Activated CD4-positive, alpha-beta memory T cell treated with anti-CD3 and anti-CD28 coated beads, Interleukin-2, amount 10 ng/mL, durations not matched to agents 7 days and 5 days (primary cell): ENCODE measurements at regions of chr5 and their contacts with region 1.

Region 1: GRCh38 chr5:126676195-126676624 is 75.5 kb downstream of the PHAX start:
- DNase-seq: peak; percentile 75
- H3K4me3 Mint-ChIP-seq: no peak overlapping the region
- H3K27ac Mint-ChIP-seq: peak overlapping the region; percentile 1
- H3K4me1 Mint-ChIP-seq: peaks cover 18% of the 10 kb centered on the region
- H3K27me3 Mint-ChIP-seq: no peaks in the 10 kb centered on the region

Region 2: GRCh38 chr5:126274076-126274762 is 402.0 kb before region 1 on chr5:
- CTCF ChIA-PET with region 1: no interaction called
- POLR2A ChIA-PET with region 1: no interaction called
- DNase-seq: no peak
- H3K4me3 Mint-ChIP-seq: no peak overlapping the region
- H3K27ac Mint-ChIP-seq: no peak overlapping the region
- H3K4me1 Mint-ChIP-seq: no peaks in the 10 kb centered on the region
- H3K27me3 Mint-ChIP-seq: no peaks in the 10 kb centered on the region

Region 3: DNA sequence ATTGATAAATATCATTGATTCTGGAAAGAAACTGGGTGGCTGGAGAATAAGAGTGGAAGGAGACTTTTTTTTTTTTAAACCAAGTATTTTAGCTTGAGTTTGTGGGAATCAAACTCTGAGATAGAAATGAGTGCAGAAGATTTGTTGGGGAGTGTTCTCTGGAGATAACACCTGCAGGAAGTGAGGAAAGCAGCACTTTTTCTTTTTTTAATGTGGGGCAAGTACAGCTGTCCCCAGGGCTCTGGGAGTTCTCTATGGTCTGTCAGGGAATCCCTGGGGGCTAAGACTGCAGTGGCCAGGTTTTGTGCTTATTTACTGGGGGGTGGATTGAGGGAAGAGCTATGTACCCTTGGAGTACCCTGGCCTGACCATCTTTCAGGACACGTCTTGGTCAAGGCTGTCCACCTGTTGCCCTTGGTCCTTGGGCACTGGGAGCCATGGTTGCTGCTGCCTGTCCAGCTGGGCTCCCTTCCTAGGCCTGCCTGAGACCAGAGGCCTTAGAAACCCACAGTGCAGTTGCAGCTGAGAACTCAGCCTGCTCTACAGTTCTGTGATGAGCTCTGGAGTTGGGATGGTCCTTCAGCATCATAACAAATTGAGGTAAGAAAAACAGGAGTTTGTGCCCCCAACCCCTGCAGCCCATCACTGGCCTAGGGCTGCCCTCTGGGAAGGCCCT is 10.4 kb after region 1 on chr5:
- CTCF ChIA-PET with region 1: interaction called, 10 read pairs
- POLR2A ChIA-PET with region 1: no interaction called
- DNase-seq: no peak
- H3K4me3 Mint-ChIP-seq: no peak overlapping the region
- H3K27ac Mint-ChIP-seq: no peak overlapping the region
- H3K4me1 Mint-ChIP-seq: peaks cover 16% of the 10 kb centered on the region
- H3K27me3 Mint-ChIP-seq: peaks cover 2% of the 10 kb centered on the region

Region 4: DNA sequence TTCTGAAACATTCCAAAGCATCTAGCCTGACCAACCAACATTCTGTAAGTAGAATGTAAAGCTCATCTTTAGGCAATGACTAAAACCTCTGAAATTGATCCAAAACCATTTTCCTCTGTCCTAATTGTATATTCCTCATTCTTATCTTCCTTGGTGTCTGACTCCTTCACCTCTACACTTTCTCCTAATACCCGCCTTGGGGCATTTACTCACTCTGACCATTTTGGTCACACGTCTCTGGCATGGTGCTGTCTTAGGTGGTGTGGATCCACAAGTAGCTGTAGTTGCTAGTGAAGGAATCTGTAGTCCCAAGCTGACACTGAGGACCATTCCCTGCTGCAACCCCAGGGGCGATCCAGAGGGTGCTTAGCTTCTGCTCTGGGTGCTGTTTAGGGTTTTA is 59.9 kb after region 1 on chr5:
- CTCF ChIA-PET with region 1: interaction called, 19 read pairs
- POLR2A ChIA-PET with region 1: interaction called, 14 read pairs
- DNase-seq: peak; percentile 7
- H3K4me3 Mint-ChIP-seq: no peak overlapping the region
- H3K27ac Mint-ChIP-seq: no peak overlapping the region
- H3K4me1 Mint-ChIP-seq: peaks cover 5% of the 10 kb centered on the region
- H3K27me3 Mint-ChIP-seq: peaks cover 6% of the 10 kb centered on the region

Region 5: GRCh38 chr5:126745259-126745992 is 69.2 kb after region 1 on chr5:
- CTCF ChIA-PET with region 1: interaction called, 14 read pairs
- POLR2A ChIA-PET with region 1: interaction called, 4 read pairs
- DNase-seq: no peak
- H3K4me3 Mint-ChIP-seq: no peak overlapping the region
- H3K27ac Mint-ChIP-seq: no peak overlapping the region
- H3K4me1 Mint-ChIP-seq: peaks cover 30% of the 10 kb centered on the region
- H3K27me3 Mint-ChIP-seq: peaks cover 2% of the 10 kb centered on the region

Region 6: GRCh38 chr5:126801992-126802294 is 125.7 kb after region 1 on chr5:
- CTCF ChIA-PET with region 1: interaction called, 43 read pairs
- POLR2A ChIA-PET with region 1: interaction called, 5 read pairs
- DNase-seq: no peak
- H3K4me3 Mint-ChIP-seq: no peak overlapping the region
- H3K27ac Mint-ChIP-seq: no peak overlapping the region
- H3K4me1 Mint-ChIP-seq: peaks cover 45% of the 10 kb centered on the region
- H3K27me3 Mint-ChIP-seq: no peaks in the 10 kb centered on the region

Region 7: GRCh38 chr5:126808521-126808988 is 132.3 kb after region 1 on chr5:
- CTCF ChIA-PET with region 1: interaction called, 43 read pairs
- POLR2A ChIA-PET with region 1: interaction called, 6 read pairs
- DNase-seq: no peak
- H3K4me3 Mint-ChIP-seq: no peak overlapping the region
- H3K27ac Mint-ChIP-seq: no peak overlapping the region
- H3K4me1 Mint-ChIP-seq: peaks cover 56% of the 10 kb centered on the region
- H3K27me3 Mint-ChIP-seq: no peaks in the 10 kb centered on the region

Region 8: DNA sequence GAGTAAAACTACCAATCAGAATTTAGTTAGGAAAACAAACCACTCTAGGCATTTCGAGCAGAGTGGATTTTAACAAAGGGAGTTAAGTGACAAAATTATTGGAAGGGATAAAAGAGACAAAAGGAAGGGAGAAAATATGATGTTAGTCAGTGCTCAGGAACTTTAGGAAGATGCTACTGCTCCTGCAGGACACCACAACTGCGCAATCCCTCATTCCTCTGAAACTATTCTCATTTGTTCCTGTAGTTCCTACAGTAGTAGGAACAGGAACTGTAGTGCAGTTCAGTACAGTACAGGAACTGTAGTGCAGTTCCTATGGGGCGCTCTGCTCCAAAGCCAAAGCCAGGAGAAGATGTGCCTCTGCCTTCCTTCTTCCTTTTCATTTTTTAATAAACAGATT is 584.5 kb after region 1 on chr5:
- CTCF ChIA-PET with region 1: no interaction called
- POLR2A ChIA-PET with region 1: no interaction called
- DNase-seq: no peak
- H3K4me3 Mint-ChIP-seq: no peak overlapping the region
- H3K27ac Mint-ChIP-seq: no peak overlapping the region
- H3K4me1 Mint-ChIP-seq: no peaks in the 10 kb centered on the region
- H3K27me3 Mint-ChIP-seq: peaks cover 5% of the 10 kb centered on the region